B cell (primary cell): ENCODE measurements at regions of chr2 and their contacts with region 1.

Region 1: GRCh38 chr2:70124983-70125480 is 37.8 kb downstream of the PCBP1 start:
- DNase-seq: peak; percentile 95
- ATAC-seq: peak; percentile 66
- H3K4me3 ChIP-seq: peak overlapping the region; percentile 32 to 99 (median 71)
- H3K4me3 Mint-ChIP-seq: peak overlapping the region; percentile 95
- H3K27ac ChIP-seq: peak overlapping the region; percentile 100
- H3K27ac Mint-ChIP-seq: peak overlapping the region; percentile 100
- H3K4me1 ChIP-seq: peaks cover 63 to 71% of the 10 kb centered on the region in 2 donors
- H3K4me1 Mint-ChIP-seq: peaks cover 65% of the 10 kb centered on the region
- H3K27me3 ChIP-seq: no peaks in the 10 kb centered on the region
- H3K27me3 Mint-ChIP-seq: no peaks in the 10 kb centered on the region
- CTCF ChIP-seq: no peak

Region 2: GRCh38 chr2:70070541-70071268 is 54.3 kb before region 1 on chr2:
- CTCF ChIA-PET with region 1: interaction called, 4 read pairs
- POLR2A ChIA-PET with region 1: interaction called, 12 read pairs
- intact Hi-C with region 1: no loop called
- DNase-seq: peak; percentile 86
- ATAC-seq: peak; percentile 96
- H3K4me3 ChIP-seq: no peak overlapping the region
- H3K4me3 Mint-ChIP-seq: peak overlapping the region; percentile 63
- H3K27ac ChIP-seq: peak overlapping the region; percentile 57 to 79
- H3K27ac Mint-ChIP-seq: peak overlapping the region; percentile 88
- H3K4me1 ChIP-seq: peaks cover 32 to 33% of the 10 kb centered on the region in 2 donors
- H3K4me1 Mint-ChIP-seq: peaks cover 30% of the 10 kb centered on the region
- H3K27me3 ChIP-seq: no peaks in the 10 kb centered on the region
- H3K27me3 Mint-ChIP-seq: no peaks in the 10 kb centered on the region
- CTCF ChIP-seq: peak; percentile 79

Region 3: DNA sequence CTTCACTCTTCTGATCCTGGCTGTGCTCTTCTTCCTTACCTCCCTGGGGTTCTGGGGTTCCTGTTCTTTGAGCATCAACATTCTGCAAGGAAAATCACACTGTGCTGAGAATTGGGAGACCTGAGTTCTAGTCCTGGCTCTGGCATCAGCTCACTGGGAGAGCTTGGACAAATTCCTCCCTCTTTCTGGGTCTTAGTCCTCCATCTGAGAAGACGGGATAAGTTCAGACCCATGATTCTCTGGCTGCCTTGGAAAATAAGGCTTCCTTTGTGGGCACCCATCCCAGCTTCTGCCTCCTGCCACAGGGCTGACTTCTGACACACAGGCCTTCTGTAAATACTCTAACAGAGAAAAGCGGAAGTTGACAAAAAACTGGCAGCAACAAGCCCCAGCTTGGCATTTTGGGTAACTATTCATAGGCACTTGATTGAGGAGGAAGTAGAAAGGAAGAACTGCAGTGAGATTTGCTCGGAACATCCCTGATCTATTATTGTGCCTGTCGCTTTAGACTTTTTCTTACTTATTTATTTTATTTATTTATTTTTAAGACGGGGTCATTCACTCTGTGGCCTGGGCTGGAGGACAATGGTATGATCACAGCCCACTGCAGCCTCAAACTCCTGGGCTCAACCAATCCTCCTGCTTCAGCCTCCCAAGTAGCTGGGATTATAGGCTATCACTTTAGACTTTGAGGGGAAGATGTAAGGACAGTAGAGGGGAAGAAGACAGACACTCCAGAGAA is 29.9 kb before region 1 on chr2:
- CTCF ChIA-PET with region 1: interaction called, 59 read pairs
- POLR2A ChIA-PET with region 1: interaction called, 170 read pairs
- intact Hi-C with region 1: loop called (anchors 1 kb)
- DNase-seq: peak; percentile 90
- ATAC-seq: peak; percentile 94
- H3K4me3 ChIP-seq: peak overlapping the region; percentile 29 to 68 (median 57)
- H3K4me3 Mint-ChIP-seq: peak overlapping the region; percentile 86
- H3K27ac ChIP-seq: peak overlapping the region; percentile 83 to 87
- H3K27ac Mint-ChIP-seq: peak overlapping the region; percentile 98
- H3K4me1 ChIP-seq: peaks cover 43 to 59% of the 10 kb centered on the region in 2 donors
- H3K4me1 Mint-ChIP-seq: peaks cover 46% of the 10 kb centered on the region
- H3K27me3 ChIP-seq: no peaks in the 10 kb centered on the region
- H3K27me3 Mint-ChIP-seq: no peaks in the 10 kb centered on the region
- CTCF ChIP-seq: no peak